ENCODE measurements at regions of chr12 and their contacts with region 1.

Region 1: DNA sequence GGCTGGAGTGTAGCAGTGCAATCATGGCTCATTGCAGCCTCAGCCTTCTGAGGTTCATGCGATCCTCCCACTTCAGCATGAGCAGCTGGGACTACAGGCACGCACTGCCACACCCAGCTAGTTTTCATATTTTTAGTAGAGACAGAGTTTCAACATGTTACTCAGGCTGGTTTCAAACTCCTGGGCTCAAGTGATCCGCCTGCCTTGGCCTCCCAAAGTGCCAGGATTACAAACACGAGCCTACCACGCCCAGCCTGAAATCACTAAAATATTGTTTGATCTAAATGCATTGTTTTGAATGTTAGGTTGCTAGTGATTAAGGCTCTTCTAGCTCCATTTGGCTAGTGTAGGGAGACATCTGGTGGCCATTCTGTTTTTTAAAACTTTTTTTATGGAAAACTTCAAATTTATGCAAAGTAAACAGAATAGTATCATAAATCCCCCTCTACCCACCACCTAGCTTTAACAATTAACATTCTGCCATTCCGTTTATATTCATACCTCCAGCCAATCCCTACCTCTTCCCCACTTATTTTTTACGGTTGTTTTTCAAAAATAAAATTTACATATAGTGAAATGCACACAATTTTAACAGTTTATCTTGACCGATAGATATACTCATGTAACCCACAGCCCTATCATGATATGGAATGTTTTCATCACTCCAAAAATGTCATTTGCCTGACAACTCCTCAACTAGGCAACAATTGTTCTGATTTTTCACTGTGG is 37.8 kb downstream of the MYO1H start:
- DNase-seq: no peak
- ATAC-seq: 0 out of 3 replicates have a peak, but pooled peaks have one; percentile 26
- H3K4me3 ChIP-seq: no peak overlapping the region
- H3K27ac ChIP-seq: no peak overlapping the region
- H3K4me1 ChIP-seq: no peaks in the 10 kb centered on the region
- H3K27me3 ChIP-seq: peaks cover 0 to 6% of the 10 kb centered on the region in 2 experiments; a peak in 1 of 4 replicates
- CTCF ChIP-seq: peak; percentile 32 to 55 (median 37); a peak in 4 of 6 replicates
- EP300 ChIP-seq: no peak
- POLR2A ChIP-seq: no peak
- RAD21 ChIP-seq: peak; percentile 85

Region 2: GRCh38 chr12:108980831-108981618 is 404.5 kb before region 1 on chr12:
- CTCF ChIA-PET with region 1: no interaction called
- POLR2A ChIA-PET with region 1: no interaction called
- RAD21 ChIA-PET with region 1: no interaction called
- SMC1A ChIA-PET with region 1: no interaction called
- in situ Hi-C with region 1: no loop called
- intact Hi-C with region 1: no loop called
- DNase-seq: no peak
- ATAC-seq: no peak
- H3K4me3 ChIP-seq: no peak overlapping the region
- H3K27ac ChIP-seq: no peak overlapping the region
- H3K4me1 ChIP-seq: no peaks in the 10 kb centered on the region
- H3K27me3 ChIP-seq: peaks cover 0 to 2% of the 10 kb centered on the region in 2 experiments; a peak in 3 of 4 replicates
- CTCF ChIP-seq: no peak
- EP300 ChIP-seq: no peak
- POLR2A ChIP-seq: no peak
- RAD21 ChIP-seq: no peak

Region 3: GRCh38 chr12:109110988-109111495 is 274.5 kb before region 1 on chr12:
- CTCF ChIA-PET with region 1: interaction called, 13 read pairs
- POLR2A ChIA-PET with region 1: no interaction called
- RAD21 ChIA-PET with region 1: interaction called, 3 read pairs
- SMC1A ChIA-PET with region 1: no interaction called
- in situ Hi-C with region 1: no loop called
- intact Hi-C with region 1: no loop called
- DNase-seq: no peak
- ATAC-seq: no peak; the same call in 2 of the 3 replicates
- H3K4me3 ChIP-seq: peak overlapping the region; percentile 37; the same call in 1 of the 2 replicates
- H3K27ac ChIP-seq: no peak overlapping the region
- H3K4me1 ChIP-seq: no peaks in the 10 kb centered on the region
- H3K27me3 ChIP-seq: no peaks in the 10 kb centered on the region
- CTCF ChIP-seq: no peak
- EP300 ChIP-seq: no peak
- POLR2A ChIP-seq: peak; percentile 69
- RAD21 ChIP-seq: no peak

Region 4: GRCh38 chr12:109134186-109134917 is 251.2 kb before region 1 on chr12:
- CTCF ChIA-PET with region 1: no interaction called
- POLR2A ChIA-PET with region 1: no interaction called
- RAD21 ChIA-PET with region 1: no interaction called
- SMC1A ChIA-PET with region 1: no interaction called
- in situ Hi-C with region 1: no loop called
- intact Hi-C with region 1: loop called (anchors 10 kb)
- DNase-seq: no peak
- ATAC-seq: no peak
- H3K4me3 ChIP-seq: no peak overlapping the region
- H3K27ac ChIP-seq: no peak overlapping the region
- H3K4me1 ChIP-seq: no peaks in the 10 kb centered on the region
- H3K27me3 ChIP-seq: no peaks in the 10 kb centered on the region
- CTCF ChIP-seq: peak; percentile 5 to 25 (median 18); a peak in 1 of 6 replicates
- EP300 ChIP-seq: no peak
- POLR2A ChIP-seq: no peak
- RAD21 ChIP-seq: no peak

Region 5: DNA sequence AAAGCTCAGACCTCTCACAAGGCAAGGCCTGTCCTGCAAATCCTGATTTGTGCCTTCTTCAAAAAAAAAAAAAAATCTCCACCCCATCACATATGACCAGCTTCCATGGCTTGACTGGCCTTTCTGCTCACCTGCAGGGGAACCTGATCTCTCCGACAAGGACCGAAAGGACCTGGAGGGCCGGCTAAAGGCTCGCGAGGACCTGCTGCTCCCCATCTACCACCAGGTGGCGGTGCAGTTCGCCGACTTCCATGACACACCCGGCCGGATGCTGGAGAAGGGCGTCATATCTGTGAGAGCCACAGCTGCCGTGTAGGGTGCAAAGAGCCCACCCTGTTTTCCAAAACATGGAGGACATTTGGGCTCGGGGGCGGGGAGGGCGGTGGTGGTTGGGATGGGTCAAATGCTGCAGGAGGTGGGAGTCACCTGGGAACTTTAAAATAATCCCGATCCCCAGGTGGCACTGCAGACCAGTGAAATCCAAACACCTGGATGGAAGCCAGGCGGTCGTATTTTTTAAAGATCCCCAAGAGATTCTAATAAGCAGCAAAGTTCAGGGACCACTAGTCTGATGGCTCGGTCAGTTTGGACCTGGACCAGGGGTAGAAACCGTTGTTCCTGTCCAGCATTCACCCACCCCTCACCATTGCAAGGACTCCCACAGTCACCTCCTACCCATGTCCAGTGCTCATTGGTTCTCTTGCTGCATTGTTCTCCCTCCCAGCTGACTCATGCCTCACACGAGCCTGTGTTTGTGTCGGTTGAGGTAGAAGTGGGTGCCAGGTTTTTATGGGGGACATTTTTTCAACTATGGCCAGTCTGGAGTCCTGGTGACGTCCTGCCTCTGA is 121.2 kb before region 1 on chr12:
- CTCF ChIA-PET with region 1: interaction called, 48 read pairs
- POLR2A ChIA-PET with region 1: no interaction called
- RAD21 ChIA-PET with region 1: interaction called, 8 read pairs
- SMC1A ChIA-PET with region 1: interaction called, 8 read pairs
- in situ Hi-C with region 1: loop called (anchors 5 kb)
- intact Hi-C with region 1: loop called (anchors 1 kb)
- DNase-seq: no peak
- ATAC-seq: peak; percentile 99
- H3K4me3 ChIP-seq: no peak overlapping the region
- H3K27ac ChIP-seq: no peak overlapping the region
- H3K4me1 ChIP-seq: no peaks in the 10 kb centered on the region
- H3K27me3 ChIP-seq: no peaks in the 10 kb centered on the region; a peak in 1 of 4 replicates
- CTCF ChIP-seq: peak; percentile 80 to 94 (median 86)
- EP300 ChIP-seq: no peak
- POLR2A ChIP-seq: no peak
- RAD21 ChIP-seq: peak; percentile 75

Region 6: DNA sequence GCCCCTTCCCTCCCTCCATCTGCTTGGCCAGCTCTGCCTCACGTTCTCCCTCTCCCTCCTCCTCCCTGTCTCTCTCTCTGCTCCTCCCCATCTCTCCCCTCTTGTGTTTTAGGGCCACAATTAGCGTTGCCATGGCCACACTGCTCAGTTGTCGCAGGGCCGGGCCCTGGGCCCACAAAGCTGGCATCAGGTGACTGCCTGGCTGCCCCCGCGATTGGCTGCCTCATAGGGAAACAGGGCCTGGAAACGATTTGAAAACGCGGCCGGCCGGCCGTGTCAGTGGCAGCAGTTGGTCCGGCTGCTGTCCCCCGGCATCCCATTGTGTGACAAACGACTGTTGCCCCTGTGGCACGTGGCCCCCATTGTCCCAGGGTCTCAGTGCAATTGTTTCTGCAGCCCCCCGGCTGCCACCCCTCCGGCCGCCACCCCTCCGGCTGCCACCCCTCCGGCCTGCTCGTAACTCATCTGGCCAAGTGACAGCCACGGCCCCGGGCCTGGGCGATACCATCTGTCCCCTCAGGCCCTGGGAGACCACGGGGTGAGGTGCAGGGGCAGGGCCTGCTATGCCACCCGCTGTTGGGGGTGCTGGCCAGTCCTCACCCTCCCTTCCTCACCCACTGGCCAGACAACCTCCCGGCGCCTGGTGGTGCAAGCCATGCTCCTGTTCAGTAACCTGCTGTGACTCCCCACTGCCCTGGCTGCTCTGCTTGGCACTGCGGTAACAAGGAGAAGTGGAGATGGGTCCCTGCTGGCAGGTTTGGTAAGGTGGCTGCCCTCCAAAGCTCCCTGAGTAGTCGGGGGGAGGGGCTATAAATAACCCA is 93.8 kb before region 1 on chr12:
- CTCF ChIA-PET with region 1: no interaction called
- POLR2A ChIA-PET with region 1: no interaction called
- RAD21 ChIA-PET with region 1: no interaction called
- SMC1A ChIA-PET with region 1: no interaction called
- in situ Hi-C with region 1: no loop called
- intact Hi-C with region 1: no loop called
- DNase-seq: no peak
- ATAC-seq: peak; percentile 29
- H3K4me3 ChIP-seq: no peak overlapping the region
- H3K27ac ChIP-seq: no peak overlapping the region
- H3K4me1 ChIP-seq: no peaks in the 10 kb centered on the region
- H3K27me3 ChIP-seq: peaks cover 1 to 3% of the 10 kb centered on the region in 2 experiments; a peak in 3 of 4 replicates
- CTCF ChIP-seq: no peak
- EP300 ChIP-seq: no peak
- POLR2A ChIP-seq: no peak
- RAD21 ChIP-seq: no peak

Measured in GM12878 (cell line).